CD4-positive, alpha-beta T cell (primary cell): ENCODE measurements at regions of chr15 and their contacts with region 1.

Region 1: DNA sequence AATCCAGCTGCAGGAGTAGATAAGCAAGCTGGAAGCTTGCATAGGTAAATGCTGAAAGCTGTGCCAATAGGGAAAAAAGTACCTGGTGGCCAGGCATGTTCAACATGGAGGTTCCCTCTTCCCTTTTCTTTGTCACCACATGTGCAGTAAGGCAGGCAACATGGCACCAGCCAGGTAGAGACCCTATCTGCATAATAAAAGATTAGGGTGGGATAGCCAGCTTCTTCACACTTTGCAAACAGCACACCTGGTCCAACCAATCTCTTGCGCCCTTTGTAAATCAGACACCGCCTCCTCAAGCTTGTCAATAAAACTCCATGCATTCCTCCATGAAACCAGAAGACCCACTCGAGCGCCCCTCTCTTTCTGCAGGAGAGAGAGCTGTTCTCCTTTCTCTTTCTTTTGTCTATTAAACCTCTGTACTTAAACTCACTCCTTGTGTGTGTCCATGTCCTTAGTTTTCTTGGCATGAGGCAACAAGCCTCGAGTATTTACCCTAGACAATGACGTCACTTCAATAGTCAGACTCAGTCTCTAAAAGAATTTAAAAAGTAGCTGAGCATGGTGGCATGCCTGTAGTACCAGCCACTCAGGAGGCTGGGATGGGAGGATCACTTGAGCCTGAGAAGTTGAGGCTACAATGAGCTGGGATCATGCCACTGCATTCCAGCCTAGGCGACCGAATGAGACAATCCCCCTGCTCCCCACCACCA is 256.3 kb downstream of the SCAPER start:
- DNase-seq: no peak
- ATAC-seq: no peak
- H3K4me3 ChIP-seq: no peak overlapping the region
- H3K4me3 Mint-ChIP-seq: no peak overlapping the region
- H3K27ac ChIP-seq: no peak overlapping the region
- H3K27ac Mint-ChIP-seq: no peak overlapping the region
- H3K4me1 ChIP-seq: no peaks in the 10 kb centered on the region
- H3K4me1 Mint-ChIP-seq: peaks cover 9% of the 10 kb centered on the region
- H3K27me3 ChIP-seq: no peaks in the 10 kb centered on the region
- H3K27me3 Mint-ChIP-seq: no peaks in the 10 kb centered on the region
- CTCF ChIP-seq: no peak

Region 2: GRCh38 chr15:76274226-76274625 is 374.7 kb before region 1 on chr15:
- CTCF ChIA-PET with region 1: no interaction called
- POLR2A ChIA-PET with region 1: no interaction called
- intact Hi-C with region 1: no loop called
- DNase-seq: no peak
- ATAC-seq: no peak
- H3K4me3 ChIP-seq: no peak overlapping the region
- H3K4me3 Mint-ChIP-seq: no peak overlapping the region
- H3K27ac ChIP-seq: no peak overlapping the region
- H3K27ac Mint-ChIP-seq: no peak overlapping the region
- H3K4me1 ChIP-seq: no peaks in the 10 kb centered on the region
- H3K4me1 Mint-ChIP-seq: no peaks in the 10 kb centered on the region
- H3K27me3 ChIP-seq: no peaks in the 10 kb centered on the region
- H3K27me3 Mint-ChIP-seq: no peaks in the 10 kb centered on the region
- CTCF ChIP-seq: no peak

Region 3: DNA sequence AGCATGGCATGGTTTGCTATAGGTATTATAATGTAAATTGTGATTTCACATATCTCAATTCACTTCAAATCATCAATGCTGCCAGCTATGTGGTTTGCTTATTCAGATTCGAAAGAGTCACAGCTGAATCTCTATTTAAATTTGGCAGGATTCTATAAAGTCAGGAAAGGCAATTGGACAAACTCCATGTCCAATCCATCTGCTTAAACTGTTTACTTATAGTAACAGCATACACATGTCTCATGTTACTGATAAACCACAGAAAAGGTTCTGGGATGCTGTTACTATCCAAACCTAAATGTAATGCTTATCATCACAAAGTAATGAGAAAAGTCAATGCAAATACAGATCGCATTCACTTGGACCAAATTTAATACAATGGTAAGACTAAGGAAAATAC is 82.6 kb before region 1 on chr15:
- CTCF ChIA-PET with region 1: no interaction called
- POLR2A ChIA-PET with region 1: no interaction called
- intact Hi-C with region 1: no loop called
- DNase-seq: no peak
- ATAC-seq: no peak
- H3K4me3 ChIP-seq: no peak overlapping the region
- H3K4me3 Mint-ChIP-seq: no peak overlapping the region
- H3K27ac ChIP-seq: no peak overlapping the region
- H3K27ac Mint-ChIP-seq: no peak overlapping the region
- H3K4me1 ChIP-seq: no peaks in the 10 kb centered on the region
- H3K4me1 Mint-ChIP-seq: no peaks in the 10 kb centered on the region
- H3K27me3 ChIP-seq: no peaks in the 10 kb centered on the region
- H3K27me3 Mint-ChIP-seq: no peaks in the 10 kb centered on the region
- CTCF ChIP-seq: no peak

Region 4: GRCh38 chr15:76636059-76636458 is 12.8 kb before region 1 on chr15:
- CTCF ChIA-PET with region 1: no interaction called
- POLR2A ChIA-PET with region 1: no interaction called
- intact Hi-C with region 1: loop called in 1 of 2 experiments (anchors 1 kb)
- DNase-seq: no peak
- ATAC-seq: no peak
- H3K4me3 ChIP-seq: no peak overlapping the region
- H3K4me3 Mint-ChIP-seq: no peak overlapping the region
- H3K27ac ChIP-seq: no peak overlapping the region
- H3K27ac Mint-ChIP-seq: no peak overlapping the region
- H3K4me1 ChIP-seq: no peaks in the 10 kb centered on the region
- H3K4me1 Mint-ChIP-seq: no peaks in the 10 kb centered on the region
- H3K27me3 ChIP-seq: no peaks in the 10 kb centered on the region
- H3K27me3 Mint-ChIP-seq: no peaks in the 10 kb centered on the region
- CTCF ChIP-seq: no peak